H1 (cell line): ENCODE measurements at regions of chr2 and their contacts with region 1.

Region 1: DNA sequence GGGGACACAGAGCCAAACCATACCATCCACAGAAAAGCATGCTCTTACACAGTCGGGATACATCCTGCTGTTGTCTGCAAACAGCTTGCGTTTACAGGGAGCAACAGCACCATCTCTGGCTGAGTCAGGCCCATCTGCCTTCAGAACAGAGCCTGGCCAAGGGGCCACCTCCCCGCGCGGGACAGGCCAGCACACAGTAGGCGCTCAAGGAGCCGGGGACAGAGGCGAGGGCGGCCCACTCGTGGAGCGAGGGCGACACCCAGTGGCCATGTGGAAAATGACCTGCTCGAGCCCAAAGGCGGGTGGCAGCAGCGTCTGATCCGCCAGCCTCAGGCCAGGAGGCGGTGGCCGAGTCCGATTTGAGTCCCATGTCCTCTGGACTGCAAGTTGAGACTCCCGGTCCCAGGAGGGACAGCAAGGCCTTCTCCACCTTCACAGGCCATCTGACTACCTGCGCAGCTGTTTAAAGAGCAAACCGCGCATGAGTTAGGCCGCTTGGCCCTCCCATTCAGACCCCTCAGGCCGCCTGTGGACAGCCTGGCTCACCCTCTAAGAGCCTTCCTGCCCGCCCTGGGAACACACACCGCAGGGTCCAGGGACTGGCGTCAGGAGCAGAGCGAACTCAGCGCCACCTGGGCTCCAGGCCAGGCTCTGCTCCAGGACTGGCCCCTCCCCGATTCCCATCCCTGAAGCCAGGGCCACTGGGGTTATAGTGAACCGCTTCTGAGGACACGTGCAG is 38.3 kb downstream of the TTC32 start:
- DNase-seq: peak; percentile 88 to 99
- H3K4me3 ChIP-seq: peak overlapping the region in 3 of 4 experiments; percentile 44 to 52 (median 50); a peak in 7 of 8 replicates
- H3K27ac ChIP-seq: no peak overlapping the region
- H3K4me1 ChIP-seq: no peaks in the 10 kb centered on the region
- H3K27me3 ChIP-seq: peaks cover 0 to 13% (median 11%) of the 10 kb centered on the region in 4 experiments; a peak in 6 of 7 replicates
- CTCF ChIP-seq: peak; percentile 80 to 95 (median 91)
- EP300 ChIP-seq: 0 out of 3 replicates have a peak, but pooled peaks of 1 of the 2 experiments have one; percentile 55
- POLR2A ChIP-seq: no peak; a peak in 1 of 3 replicates
- RAD21 ChIP-seq: peak; percentile 99 to 100

Region 2: DNA sequence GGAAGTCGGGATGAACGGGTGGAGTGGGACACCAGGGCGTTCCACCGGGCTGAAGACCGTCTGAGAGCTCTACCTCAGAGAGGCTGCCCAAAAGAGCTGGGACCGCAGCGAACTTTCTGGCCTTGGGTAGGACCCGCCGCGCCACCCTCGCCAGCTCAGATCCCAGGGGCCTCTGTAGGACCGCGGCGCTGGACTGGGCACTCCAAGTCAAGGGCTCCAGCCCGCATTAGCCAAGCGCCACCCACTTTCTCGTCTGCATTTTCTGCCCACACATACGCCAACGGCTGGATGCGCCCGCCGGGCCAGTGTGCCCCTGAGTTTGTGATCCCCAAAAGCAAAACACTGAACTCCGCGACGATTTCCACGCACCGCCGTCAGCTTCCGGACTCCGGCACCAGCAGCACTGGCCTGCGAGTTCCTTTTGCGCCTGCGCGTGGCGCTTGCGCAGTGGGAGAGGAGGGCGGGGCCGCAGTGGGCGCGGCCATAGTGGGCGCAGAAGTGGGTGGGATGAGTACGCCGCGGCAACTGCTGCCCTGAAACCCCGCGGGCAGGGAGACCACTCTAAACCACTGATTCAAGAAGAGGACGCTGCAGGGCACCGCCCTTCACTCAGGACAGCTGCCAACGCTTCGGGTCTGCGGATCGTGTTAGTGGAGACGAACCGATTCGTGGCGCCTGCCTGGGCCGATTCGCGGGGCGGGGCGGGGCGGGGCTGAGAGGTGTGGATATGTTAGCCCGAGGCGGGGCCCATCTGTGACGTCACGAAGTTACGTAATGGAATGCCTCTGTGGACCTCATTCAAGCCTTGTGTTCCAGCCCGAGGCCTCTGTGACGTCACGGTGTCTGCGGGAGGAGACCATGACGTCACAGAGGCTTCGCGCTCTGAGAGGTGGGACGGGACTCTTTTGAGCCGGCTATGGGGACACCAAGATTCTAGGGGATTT is 515.6 kb before region 1 on chr2:
- CTCF ChIA-PET with region 1: interaction called, 18 read pairs
- POLR2A ChIA-PET with region 1: no interaction called
- DNase-seq: peak in 1 of 2 experiments; percentile 97
- H3K4me3 ChIP-seq: peak overlapping the region; percentile 79 to 92 (median 84)
- H3K27ac ChIP-seq: no peak overlapping the region
- H3K4me1 ChIP-seq: peaks cover 0 to 11% (median 3%) of the 10 kb centered on the region in 4 experiments; a peak in 6 of 7 replicates
- H3K27me3 ChIP-seq: peaks cover 39 to 47% (median 45%) of the 10 kb centered on the region in 4 experiments
- CTCF ChIP-seq: no peak
- EP300 ChIP-seq: no peak
- POLR2A ChIP-seq: peak in 1 of 2 experiments; percentile 76; a peak in 2 of 3 replicates
- RAD21 ChIP-seq: no peak; a peak in 1 of 4 replicates

Region 3: GRCh38 chr2:19355931-19356544 is 507.4 kb before region 1 on chr2:
- CTCF ChIA-PET with region 1: interaction called, 18 read pairs
- POLR2A ChIA-PET with region 1: no interaction called
- DNase-seq: no peak
- H3K4me3 ChIP-seq: peak overlapping the region in 2 of 4 experiments; percentile 14 to 59; a peak in 3 of 8 replicates
- H3K27ac ChIP-seq: no peak overlapping the region
- H3K4me1 ChIP-seq: peaks cover 9 to 48% (median 25%) of the 10 kb centered on the region in 4 experiments
- H3K27me3 ChIP-seq: peaks cover 96 to 99% (median 98%) of the 10 kb centered on the region in 4 experiments
- CTCF ChIP-seq: no peak
- EP300 ChIP-seq: no peak
- POLR2A ChIP-seq: no peak
- RAD21 ChIP-seq: no peak

Region 4: GRCh38 chr2:19362755-19363473 is 500.6 kb before region 1 on chr2:
- CTCF ChIA-PET with region 1: interaction called, 18 read pairs
- POLR2A ChIA-PET with region 1: no interaction called
- DNase-seq: peak in 1 of 2 experiments; percentile 80
- H3K4me3 ChIP-seq: peak overlapping the region in 3 of 4 experiments; percentile 23 to 51 (median 24); a peak in 6 of 8 replicates
- H3K27ac ChIP-seq: no peak overlapping the region
- H3K4me1 ChIP-seq: peaks cover 0 to 23% (median 6%) of the 10 kb centered on the region in 4 experiments; a peak in 6 of 7 replicates
- H3K27me3 ChIP-seq: peaks cover 58 to 81% (median 70%) of the 10 kb centered on the region in 4 experiments
- CTCF ChIP-seq: peak; percentile 64 to 65 (median 65)
- EP300 ChIP-seq: no peak
- POLR2A ChIP-seq: no peak
- RAD21 ChIP-seq: peak; percentile 74 to 76

Region 5: GRCh38 chr2:19369341-19369955 is 494.0 kb before region 1 on chr2:
- CTCF ChIA-PET with region 1: interaction called, 10 read pairs
- POLR2A ChIA-PET with region 1: no interaction called
- DNase-seq: no peak
- H3K4me3 ChIP-seq: no peak overlapping the region
- H3K27ac ChIP-seq: no peak overlapping the region
- H3K4me1 ChIP-seq: no peaks in the 10 kb centered on the region
- H3K27me3 ChIP-seq: peaks cover 2 to 17% (median 8%) of the 10 kb centered on the region in 4 experiments
- CTCF ChIP-seq: peak; percentile 17 to 74 (median 51)
- EP300 ChIP-seq: no peak
- POLR2A ChIP-seq: no peak
- RAD21 ChIP-seq: peak; percentile 76 to 83

Region 6: DNA sequence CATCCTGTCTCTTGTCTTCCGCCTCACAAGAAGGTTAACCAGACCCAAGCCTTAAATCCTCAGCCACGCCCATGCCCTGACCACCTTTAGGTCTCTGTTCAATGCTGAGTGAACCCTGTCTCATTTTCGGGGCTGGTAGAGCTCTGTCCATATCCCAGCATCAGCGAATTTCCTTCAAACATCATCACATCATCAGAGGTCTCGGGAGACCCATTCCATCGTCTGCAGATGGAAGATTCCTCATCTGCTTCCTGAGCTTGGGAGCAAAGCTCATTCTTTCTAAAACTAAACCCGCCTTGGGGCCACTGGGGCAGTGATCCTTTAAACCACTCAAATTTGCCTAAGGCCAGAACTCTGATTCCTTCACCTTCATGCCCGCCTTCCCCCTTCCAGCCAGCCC is 135.3 kb before region 1 on chr2:
- CTCF ChIA-PET with region 1: interaction called, 14 read pairs
- POLR2A ChIA-PET with region 1: no interaction called
- DNase-seq: no peak
- H3K4me3 ChIP-seq: no peak overlapping the region
- H3K27ac ChIP-seq: no peak overlapping the region
- H3K4me1 ChIP-seq: no peaks in the 10 kb centered on the region
- H3K27me3 ChIP-seq: no peaks in the 10 kb centered on the region
- CTCF ChIP-seq: no peak
- EP300 ChIP-seq: no peak
- POLR2A ChIP-seq: no peak
- RAD21 ChIP-seq: no peak

Region 7: GRCh38 chr2:19876751-19877150 is 13.3 kb after region 1 on chr2:
- CTCF ChIA-PET with region 1: interaction called, 33 read pairs
- POLR2A ChIA-PET with region 1: no interaction called
- DNase-seq: no peak
- H3K4me3 ChIP-seq: no peak overlapping the region
- H3K27ac ChIP-seq: no peak overlapping the region
- H3K4me1 ChIP-seq: no peaks in the 10 kb centered on the region
- H3K27me3 ChIP-seq: peaks cover 0 to 2% (median 0%) of the 10 kb centered on the region in 4 experiments; a peak in 1 of 7 replicates
- CTCF ChIP-seq: no peak
- EP300 ChIP-seq: no peak
- POLR2A ChIP-seq: no peak
- RAD21 ChIP-seq: no peak

Region 8: GRCh38 chr2:19932928-19933327 is 69.5 kb after region 1 on chr2:
- CTCF ChIA-PET with region 1: no interaction called
- POLR2A ChIA-PET with region 1: no interaction called
- DNase-seq: no peak
- H3K4me3 ChIP-seq: no peak overlapping the region
- H3K27ac ChIP-seq: no peak overlapping the region
- H3K4me1 ChIP-seq: no peaks in the 10 kb centered on the region
- H3K27me3 ChIP-seq: no peaks in the 10 kb centered on the region
- CTCF ChIP-seq: no peak
- EP300 ChIP-seq: no peak
- POLR2A ChIP-seq: no peak
- RAD21 ChIP-seq: no peak

Region 9: DNA sequence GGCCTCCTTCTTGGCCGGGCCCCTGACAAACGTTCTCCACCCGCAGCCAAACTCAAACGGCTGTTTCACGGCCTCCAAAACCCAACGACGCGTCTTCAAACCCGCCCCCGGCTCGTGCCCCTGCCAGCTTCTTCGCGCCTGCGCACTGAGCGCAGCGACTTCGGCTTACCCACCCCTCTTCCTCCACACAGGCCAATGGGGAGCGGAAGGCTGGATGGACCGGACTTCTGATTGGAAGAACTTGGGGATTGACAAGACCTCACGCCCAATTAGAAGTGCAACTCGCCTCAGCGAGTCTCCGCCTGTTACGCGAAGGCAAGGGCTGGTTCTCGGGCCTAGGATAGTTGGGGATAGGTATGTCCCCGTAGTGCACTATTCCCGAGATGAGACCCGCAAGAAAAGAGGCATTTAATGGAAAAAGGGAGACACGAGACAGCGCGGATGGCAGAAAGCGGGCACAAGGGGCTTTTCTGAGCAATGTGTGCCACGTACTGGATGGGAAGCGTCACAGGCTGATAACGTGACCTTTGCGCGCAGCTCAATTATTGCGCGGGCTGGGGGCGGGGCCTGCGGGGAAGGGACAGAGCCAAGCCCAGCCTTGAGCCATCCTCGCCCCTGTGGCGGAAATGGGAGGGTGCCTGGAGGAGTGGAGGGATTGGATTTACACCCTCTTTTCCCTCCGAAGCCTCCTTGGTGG is 188.2 kb after region 1 on chr2 and contains the start of gene LAPTM4A:
- CTCF ChIA-PET with region 1: no interaction called
- POLR2A ChIA-PET with region 1: no interaction called
- DNase-seq: peak; percentile 96 to 99
- H3K4me3 ChIP-seq: peak within 1 kb of the TSS; percentile 85 to 88 (median 86)
- H3K27ac ChIP-seq: peak within 1 kb of the TSS; percentile 94
- H3K4me1 ChIP-seq: peaks cover 0 to 5% (median 0%) of the 10 kb centered on the region in 4 experiments; a peak in 3 of 7 replicates
- H3K27me3 ChIP-seq: no peaks in the 10 kb centered on the region
- CTCF ChIP-seq: no peak
- EP300 ChIP-seq: no peak
- POLR2A ChIP-seq: peak; percentile 78 to 79
- RAD21 ChIP-seq: peak; percentile 1 to 3; a peak in 1 of 4 replicates
- total RNA-seq, gene LAPTM4A: 187 and 193 TPM in 2 replicates